Activated CD8-positive, alpha-beta T cell treated with anti-CD3 and anti-CD28 coated beads for 36 hours (primary cell): ENCODE measurements at regions of chr9 and their contacts with region 1.

Region 1: DNA sequence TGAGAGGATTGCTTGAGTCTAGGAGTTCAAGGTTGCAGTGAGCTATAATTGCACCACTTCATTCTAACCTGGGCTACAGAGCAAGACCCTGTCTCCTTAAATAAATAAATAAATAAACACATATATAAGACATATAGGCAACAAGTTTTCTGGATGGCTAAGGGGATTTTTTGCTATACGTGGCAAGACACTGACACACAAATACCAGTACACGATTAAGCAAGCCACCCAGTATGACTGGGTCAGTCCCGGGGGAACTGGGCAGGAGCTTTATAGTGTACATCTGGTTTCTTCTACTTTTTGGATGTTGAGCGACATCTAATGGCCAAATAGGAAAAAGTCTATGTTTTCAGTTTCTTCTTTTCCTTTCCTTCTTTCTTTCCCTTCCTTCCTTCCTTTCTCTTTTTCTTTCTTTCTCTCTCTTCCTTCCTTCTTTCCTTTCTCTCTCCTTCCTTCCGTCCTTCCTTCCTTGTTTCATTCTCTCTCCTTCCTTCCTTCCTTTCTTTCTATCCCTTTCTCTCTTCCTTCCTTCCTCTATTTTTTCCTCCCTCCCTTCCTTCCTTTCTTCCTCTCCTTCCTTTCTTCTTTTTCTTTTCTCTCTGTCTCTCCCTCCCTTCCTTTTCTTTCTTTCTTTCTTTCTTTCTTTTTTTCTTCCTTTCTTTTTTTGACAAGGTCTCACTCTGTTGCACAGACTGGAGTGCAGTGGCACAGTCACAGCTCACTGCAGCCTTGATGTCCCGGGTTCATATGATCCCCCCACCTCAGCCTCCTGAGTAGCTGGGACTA is 47.0 kb upstream of the PLIN2 start:
- DNase-seq: peak; percentile 63
- ATAC-seq: peak; percentile 95
- H3K4me3 Mint-ChIP-seq: peak overlapping the region; percentile 13
- H3K27ac Mint-ChIP-seq: peak overlapping the region; percentile 78
- H3K4me1 Mint-ChIP-seq: peaks cover 21% of the 10 kb centered on the region
- H3K27me3 Mint-ChIP-seq: no peaks in the 10 kb centered on the region
- CTCF ChIP-seq: peak; percentile 87

Region 2: DNA sequence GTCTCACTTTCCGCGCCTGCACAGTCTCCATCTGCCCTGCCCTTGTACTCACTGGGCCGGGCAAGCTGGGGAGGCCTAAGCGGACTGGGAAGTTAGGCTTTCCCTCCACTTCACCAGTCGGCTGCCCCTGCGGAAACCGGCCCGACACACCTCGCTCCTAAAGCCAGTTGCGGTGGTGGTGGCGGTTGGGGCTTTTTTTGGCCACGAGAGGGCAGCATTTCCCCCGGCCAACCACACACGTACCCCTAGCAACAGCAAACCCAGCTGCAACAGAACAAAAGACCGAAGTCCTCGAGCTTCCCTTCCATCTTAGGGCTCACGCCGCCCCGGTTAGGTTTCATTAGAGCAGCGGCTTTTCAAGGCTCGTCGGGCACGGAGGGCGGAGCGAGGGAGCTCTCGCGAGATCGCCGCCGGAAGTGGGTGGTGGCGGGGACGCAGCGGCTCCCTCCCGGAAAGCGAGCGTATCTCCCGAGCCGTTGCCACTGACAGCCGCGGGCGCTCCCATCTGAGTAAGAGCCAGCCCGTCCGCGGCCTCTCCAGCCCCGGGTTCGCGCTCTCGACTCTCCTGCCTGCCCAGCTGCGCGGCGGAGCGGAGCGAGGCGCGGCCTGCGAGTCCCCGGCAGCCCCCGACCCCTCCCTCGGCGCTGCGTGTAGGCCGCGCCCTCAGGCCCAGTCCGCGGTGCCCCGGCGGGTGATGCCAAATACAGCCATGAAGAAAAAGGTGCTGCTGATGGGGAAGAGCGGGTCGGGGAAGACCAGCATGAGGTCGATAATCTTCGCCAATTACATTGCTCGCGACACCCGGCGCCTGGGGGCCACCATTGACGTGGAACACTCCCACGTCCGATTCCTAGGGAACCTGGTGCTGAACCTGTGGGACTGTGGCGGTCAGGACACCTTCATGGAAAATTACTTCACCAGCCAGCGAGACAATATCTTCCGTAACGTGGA is 125.1 kb before region 1 on chr9 and contains the start of gene RRAGA:
- CTCF ChIA-PET with region 1: interaction called, 38 read pairs
- POLR2A ChIA-PET with region 1: interaction called, 3 read pairs
- intact Hi-C with region 1: loop called (anchors 2 kb)
- DNase-seq: peak; percentile 96
- ATAC-seq: peak; percentile 93
- H3K4me3 Mint-ChIP-seq: peak within 1 kb of the TSS; percentile 98
- H3K27ac Mint-ChIP-seq: peak within 1 kb of the TSS; percentile 97
- H3K4me1 Mint-ChIP-seq: peaks cover 26% of the 10 kb centered on the region
- H3K27me3 Mint-ChIP-seq: no peaks in the 10 kb centered on the region
- CTCF ChIP-seq: peak; percentile 71
- total RNA-seq, gene RRAGA: 53.6 to 56.3 TPM

Region 3: DNA sequence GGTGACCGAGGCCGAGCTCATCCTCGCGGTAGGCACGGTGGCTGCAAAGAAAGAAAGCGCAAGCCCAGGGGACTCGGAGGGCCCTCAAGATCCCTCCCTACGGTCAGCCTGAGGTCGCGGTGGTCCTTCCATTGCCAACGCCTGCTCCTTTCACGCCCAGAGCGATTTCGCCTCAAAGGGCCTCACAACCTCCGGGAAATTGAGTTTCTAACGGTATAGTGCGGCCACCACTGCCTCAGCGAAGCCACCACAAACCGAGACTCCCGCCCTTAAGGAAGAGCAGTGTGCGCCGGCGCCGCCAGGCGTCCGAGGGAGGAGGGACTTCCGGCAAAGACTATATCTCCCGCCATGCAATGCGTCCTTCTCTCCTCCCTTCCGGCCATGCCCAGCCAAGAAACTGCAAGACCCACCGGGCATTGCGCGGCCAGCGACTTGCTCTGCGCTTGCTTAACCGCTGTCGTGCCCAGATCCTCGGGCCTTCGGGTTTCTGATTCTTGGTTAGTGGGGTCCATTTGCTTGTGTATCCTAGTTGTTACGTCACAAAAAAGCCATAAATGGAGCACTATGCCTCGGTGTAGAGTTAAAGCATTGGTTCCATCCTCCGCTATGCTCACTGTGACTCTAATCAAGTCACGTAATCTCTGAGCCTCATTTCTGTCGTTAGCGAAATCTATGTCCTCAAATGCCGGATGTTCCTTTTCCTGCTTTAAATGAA is 71.5 kb before region 1 on chr9 and contains the start of gene HAUS6:
- CTCF ChIA-PET with region 1: interaction called, 13 read pairs
- POLR2A ChIA-PET with region 1: interaction called, 3 read pairs
- intact Hi-C with region 1: loop called (anchors 5 kb)
- DNase-seq: peak; percentile 98
- ATAC-seq: peak; percentile 96
- H3K4me3 Mint-ChIP-seq: peak within 1 kb of the TSS; percentile 98
- H3K27ac Mint-ChIP-seq: peak within 1 kb of the TSS; percentile 97
- H3K4me1 Mint-ChIP-seq: peaks cover 21% of the 10 kb centered on the region
- H3K27me3 Mint-ChIP-seq: no peaks in the 10 kb centered on the region
- CTCF ChIP-seq: peak; percentile 36
- total RNA-seq, gene HAUS6: 30.8 to 35.8 TPM

Region 4: GRCh38 chr9:19133549-19134345 is 40.6 kb before region 1 on chr9:
- CTCF ChIA-PET with region 1: interaction called, 28 read pairs
- POLR2A ChIA-PET with region 1: no interaction called
- intact Hi-C with region 1: loop called (anchors 5 kb)
- DNase-seq: no peak
- ATAC-seq: peak; percentile 56
- H3K4me3 Mint-ChIP-seq: no peak overlapping the region
- H3K27ac Mint-ChIP-seq: no peak overlapping the region
- H3K4me1 Mint-ChIP-seq: peaks cover 19% of the 10 kb centered on the region
- H3K27me3 Mint-ChIP-seq: no peaks in the 10 kb centered on the region
- CTCF ChIP-seq: no peak

Region 5: DNA sequence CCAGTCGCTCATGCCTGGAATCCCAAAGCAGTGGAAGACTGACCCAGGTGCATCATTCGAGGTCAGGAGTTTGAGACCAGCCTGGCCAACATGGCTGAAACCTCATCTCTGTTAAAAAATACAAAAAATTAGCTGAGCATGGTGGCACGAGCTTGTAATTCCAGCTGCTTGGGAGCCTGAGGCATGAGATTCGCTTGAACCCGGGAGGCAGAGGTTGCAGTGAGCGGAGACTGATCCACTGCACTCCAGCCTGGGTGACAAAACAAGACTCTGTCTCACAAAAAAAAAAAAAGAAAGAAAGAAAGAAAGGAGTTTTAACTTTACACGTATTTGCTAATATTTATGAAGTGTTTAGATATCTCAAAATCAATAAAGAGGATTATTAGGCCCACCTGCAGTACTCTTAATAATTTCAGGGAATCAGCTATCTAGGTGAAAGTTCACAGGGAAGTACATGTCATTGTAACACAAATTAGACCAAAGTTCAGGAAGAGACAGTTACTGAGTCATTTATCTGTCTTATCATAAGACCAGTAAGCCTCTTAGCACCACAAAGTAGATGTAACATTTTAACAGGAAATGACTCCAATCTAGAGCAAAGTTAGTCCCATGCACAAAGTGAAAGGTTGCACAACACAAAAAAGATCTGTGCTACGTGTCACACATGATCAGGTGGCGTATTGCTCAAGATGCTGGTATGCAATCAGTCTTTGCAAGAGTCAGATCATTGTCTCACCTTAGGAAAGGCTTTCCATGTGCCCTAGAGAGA is 12.9 kb before region 1 on chr9:
- CTCF ChIA-PET with region 1: interaction called, 27 read pairs
- POLR2A ChIA-PET with region 1: no interaction called
- intact Hi-C with region 1: no loop called
- DNase-seq: peak; percentile 82
- ATAC-seq: peak; percentile 97
- H3K4me3 Mint-ChIP-seq: peak overlapping the region; percentile 41
- H3K27ac Mint-ChIP-seq: peak overlapping the region; percentile 91
- H3K4me1 Mint-ChIP-seq: peaks cover 24% of the 10 kb centered on the region
- H3K27me3 Mint-ChIP-seq: no peaks in the 10 kb centered on the region
- CTCF ChIP-seq: no peak

Region 6: GRCh38 chr9:19456996-19457692 is 282.8 kb after region 1 on chr9:
- CTCF ChIA-PET with region 1: interaction called, 12 read pairs
- POLR2A ChIA-PET with region 1: no interaction called
- intact Hi-C with region 1: loop called (anchors 5 kb)
- DNase-seq: peak; percentile 67
- ATAC-seq: peak; percentile 94
- H3K4me3 Mint-ChIP-seq: peak overlapping the region; percentile 47
- H3K27ac Mint-ChIP-seq: no peak overlapping the region
- H3K4me1 Mint-ChIP-seq: peaks cover 8% of the 10 kb centered on the region
- H3K27me3 Mint-ChIP-seq: no peaks in the 10 kb centered on the region
- CTCF ChIP-seq: peak; percentile 97